Caco-2 (cell line): ENCODE measurements at regions of chr19 and their contacts with region 1.

Region 1: DNA sequence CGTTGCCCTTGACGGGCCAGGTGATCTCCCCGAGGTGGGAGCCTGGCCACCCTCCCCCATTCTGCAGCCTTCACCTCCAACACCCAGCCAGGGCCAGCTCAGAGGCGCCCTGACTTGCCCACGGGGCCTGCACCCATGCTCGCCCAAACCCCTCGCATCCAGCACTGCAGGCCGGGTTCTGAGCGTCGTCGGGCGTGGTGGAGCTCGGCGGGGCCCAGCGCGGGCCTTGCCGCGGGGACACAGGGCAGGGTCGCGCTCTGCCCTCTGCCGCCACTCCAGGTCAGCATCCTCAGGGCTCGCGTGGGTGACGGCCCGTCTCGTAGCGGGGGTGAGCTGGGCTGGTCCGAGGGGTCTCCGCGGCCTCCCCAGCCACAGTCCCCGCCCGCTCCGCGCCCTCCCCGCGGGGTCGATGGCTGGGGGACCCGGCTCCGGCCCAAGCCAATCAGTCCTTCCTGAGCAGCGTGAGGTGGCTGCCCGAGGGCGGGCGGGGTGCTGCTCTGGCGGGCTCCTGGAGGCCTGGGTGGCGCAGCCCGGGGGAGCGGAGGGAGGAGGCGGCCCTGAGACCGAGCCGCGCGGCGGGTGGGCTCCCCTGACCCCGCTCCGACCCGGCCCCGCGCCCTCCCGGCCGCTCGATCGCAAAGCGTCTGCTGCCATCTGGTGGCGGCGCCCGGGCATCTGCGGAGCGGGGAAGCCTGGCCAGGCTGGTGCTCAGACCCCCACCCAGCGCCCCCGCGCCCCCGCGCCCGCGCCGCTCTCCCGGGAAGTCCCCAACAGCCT is 61.4 kb downstream of the CCNE1 start:
- DNase-seq: peak; percentile 59 to 78
- H3K4me3 ChIP-seq: peak overlapping the region; percentile 54
- H3K4me3 Mint-ChIP-seq: peak overlapping the region; percentile 59
- H3K27ac Mint-ChIP-seq: no peak overlapping the region
- H3K4me1 ChIP-seq: peaks cover 15% of the 10 kb centered on the region
- H3K4me1 Mint-ChIP-seq: peaks cover 10% of the 10 kb centered on the region
- H3K27me3 ChIP-seq: no peaks in the 10 kb centered on the region
- H3K27me3 Mint-ChIP-seq: peaks cover 2% of the 10 kb centered on the region
- CTCF ChIP-seq: peak; percentile 78 to 93

Region 2: DNA sequence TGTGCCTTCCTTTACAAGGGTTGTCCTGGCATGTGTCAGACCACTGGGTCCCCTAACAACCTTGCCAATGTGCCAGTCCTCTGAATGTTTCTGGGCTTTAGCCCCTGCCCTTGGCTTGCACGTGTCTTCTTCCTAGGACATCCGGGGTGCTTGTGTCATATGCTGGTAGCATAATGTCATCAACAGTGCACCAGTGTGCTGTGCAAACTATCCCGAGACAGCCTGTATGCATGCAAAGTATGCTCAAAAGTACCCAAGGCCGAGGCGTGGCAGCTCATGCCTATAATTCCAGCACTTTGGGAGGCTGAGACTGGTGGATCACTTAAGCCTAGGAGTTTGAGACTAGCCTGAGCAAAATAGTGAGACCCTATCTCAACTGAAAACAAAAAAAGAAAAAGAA is 137.4 kb before region 1 on chr19:
- CTCF ChIA-PET with region 1: interaction called, 5 read pairs
- POLR2A ChIA-PET with region 1: no interaction called
- intact Hi-C with region 1: loop called (anchors 1 kb)
- DNase-seq: no peak
- H3K4me3 ChIP-seq: no peak overlapping the region
- H3K4me3 Mint-ChIP-seq: no peak overlapping the region
- H3K27ac Mint-ChIP-seq: no peak overlapping the region
- H3K4me1 ChIP-seq: no peaks in the 10 kb centered on the region
- H3K4me1 Mint-ChIP-seq: no peaks in the 10 kb centered on the region
- H3K27me3 ChIP-seq: no peaks in the 10 kb centered on the region; the same call in 1 of the 2 replicates
- H3K27me3 Mint-ChIP-seq: peaks cover 16% of the 10 kb centered on the region
- CTCF ChIP-seq: no peak

Region 3: GRCh38 chr19:29760752-29761502 is 112.3 kb before region 1 on chr19:
- CTCF ChIA-PET with region 1: interaction called, 7 read pairs
- POLR2A ChIA-PET with region 1: no interaction called
- intact Hi-C with region 1: loop called (anchors 1 kb)
- DNase-seq: no peak
- H3K4me3 ChIP-seq: no peak overlapping the region
- H3K4me3 Mint-ChIP-seq: no peak overlapping the region
- H3K27ac Mint-ChIP-seq: no peak overlapping the region
- H3K4me1 ChIP-seq: 0 out of 2 replicates have a peak, but pooled peaks cover 6% of the 10 kb centered on the region
- H3K4me1 Mint-ChIP-seq: no peaks in the 10 kb centered on the region
- H3K27me3 ChIP-seq: no peaks in the 10 kb centered on the region
- H3K27me3 Mint-ChIP-seq: peaks cover 8% of the 10 kb centered on the region
- CTCF ChIP-seq: no peak

Region 4: DNA sequence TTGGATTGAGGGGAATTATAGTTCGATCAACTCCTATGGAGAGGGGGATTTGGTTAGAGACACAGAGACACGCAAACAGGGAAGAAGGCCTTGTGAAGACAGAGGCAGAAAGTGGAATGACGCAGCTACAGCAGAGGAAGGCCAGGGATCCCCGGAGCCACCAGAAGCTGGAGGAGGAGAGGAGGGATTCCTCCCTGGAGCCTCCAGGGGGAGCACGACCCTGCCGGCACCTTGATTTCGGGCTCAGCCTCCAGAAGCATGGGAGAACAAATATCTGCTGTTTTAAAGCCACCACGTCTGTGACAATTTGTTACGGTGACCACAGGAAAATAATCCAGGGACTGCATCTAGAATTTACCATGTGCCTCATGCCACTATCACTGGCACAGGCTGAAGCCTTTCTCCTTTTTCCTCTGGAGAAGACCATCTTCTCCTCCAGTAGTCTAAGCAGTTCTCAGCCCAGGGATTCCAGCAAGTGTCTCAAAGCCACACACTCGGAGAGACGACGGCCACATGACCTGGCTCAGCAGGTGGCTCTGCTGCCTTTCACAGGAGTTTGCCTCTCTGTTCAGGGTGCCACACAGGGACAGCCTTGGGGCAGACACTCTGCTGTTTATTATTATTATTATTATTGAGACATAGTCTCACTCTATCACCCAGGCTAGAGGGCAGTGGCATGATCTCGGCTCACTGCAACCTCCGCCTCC is 101.4 kb before region 1 on chr19:
- CTCF ChIA-PET with region 1: interaction called, 4 read pairs
- POLR2A ChIA-PET with region 1: no interaction called
- intact Hi-C with region 1: loop called (anchors 1 kb)
- DNase-seq: peak; percentile 69 to 76
- H3K4me3 ChIP-seq: 0 out of 2 replicates have a peak overlapping the region, but pooled peaks have one; percentile 13
- H3K4me3 Mint-ChIP-seq: no peak overlapping the region
- H3K27ac Mint-ChIP-seq: no peak overlapping the region
- H3K4me1 ChIP-seq: no peaks in the 10 kb centered on the region
- H3K4me1 Mint-ChIP-seq: no peaks in the 10 kb centered on the region
- H3K27me3 ChIP-seq: no peaks in the 10 kb centered on the region
- H3K27me3 Mint-ChIP-seq: no peaks in the 10 kb centered on the region
- CTCF ChIP-seq: peak; percentile 70 to 98

Region 5: DNA sequence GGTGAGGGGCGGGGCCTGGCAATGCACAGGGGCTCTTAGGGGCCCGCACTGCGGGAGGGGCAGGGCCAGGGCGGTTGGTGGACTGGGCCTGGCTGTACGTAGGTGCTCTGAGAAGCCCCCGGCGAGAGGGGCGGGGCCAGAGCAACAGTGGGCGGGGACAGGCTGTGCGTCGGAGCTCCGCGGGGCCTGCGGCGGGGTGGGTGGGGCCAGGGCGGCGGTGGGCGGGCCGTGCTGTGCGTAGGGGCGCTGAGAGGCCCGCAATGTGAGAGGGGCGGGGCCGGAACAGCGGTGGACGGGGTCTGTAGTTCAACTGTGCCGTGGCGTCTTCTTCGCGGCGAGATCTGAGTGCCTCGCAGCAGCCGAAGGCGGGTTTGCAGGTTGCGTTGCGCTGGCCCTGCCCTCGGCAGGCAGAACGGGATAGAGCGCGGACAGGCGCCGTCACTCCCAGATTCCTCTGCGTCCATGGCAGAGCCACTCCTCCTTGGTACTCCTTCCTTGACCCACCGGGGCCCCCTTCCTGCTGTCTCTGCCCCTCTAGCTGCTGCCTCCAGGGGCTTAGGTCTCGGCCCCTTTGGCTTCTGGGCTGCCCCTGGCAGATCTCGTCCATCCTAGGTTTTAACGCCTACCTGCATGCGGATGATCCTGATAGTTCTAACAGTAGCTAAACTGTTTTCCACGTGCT is 28.2 kb before region 1 on chr19:
- CTCF ChIA-PET with region 1: interaction called, 4 read pairs
- POLR2A ChIA-PET with region 1: no interaction called
- intact Hi-C with region 1: loop called (anchors 1 kb)
- DNase-seq: peak; percentile 98
- H3K4me3 ChIP-seq: peak overlapping the region; percentile 63
- H3K4me3 Mint-ChIP-seq: peak overlapping the region; percentile 89
- H3K27ac Mint-ChIP-seq: peak overlapping the region; percentile 85
- H3K4me1 ChIP-seq: peaks cover 43% of the 10 kb centered on the region
- H3K4me1 Mint-ChIP-seq: peaks cover 37% of the 10 kb centered on the region
- H3K27me3 ChIP-seq: no peaks in the 10 kb centered on the region
- H3K27me3 Mint-ChIP-seq: no peaks in the 10 kb centered on the region
- CTCF ChIP-seq: peak in 1 of 2 experiments; percentile 1

Region 6: GRCh38 chr19:29858000-29858596 is 15.1 kb before region 1 on chr19:
- CTCF ChIA-PET with region 1: interaction called, 56 read pairs
- POLR2A ChIA-PET with region 1: no interaction called
- intact Hi-C with region 1: loop called (anchors 1 kb)
- DNase-seq: peak; percentile 74 to 82
- H3K4me3 ChIP-seq: no peak overlapping the region
- H3K4me3 Mint-ChIP-seq: no peak overlapping the region
- H3K27ac Mint-ChIP-seq: no peak overlapping the region
- H3K4me1 ChIP-seq: peaks cover 11% of the 10 kb centered on the region
- H3K4me1 Mint-ChIP-seq: peaks cover 13% of the 10 kb centered on the region
- H3K27me3 ChIP-seq: no peaks in the 10 kb centered on the region
- H3K27me3 Mint-ChIP-seq: no peaks in the 10 kb centered on the region
- CTCF ChIP-seq: peak; percentile 86

Region 7: GRCh38 chr19:29908963-29909944 is 36.0 kb after region 1 on chr19:
- CTCF ChIA-PET with region 1: no interaction called
- POLR2A ChIA-PET with region 1: no interaction called
- intact Hi-C with region 1: no loop called
- DNase-seq: no peak
- H3K4me3 ChIP-seq: no peak overlapping the region
- H3K4me3 Mint-ChIP-seq: no peak overlapping the region
- H3K27ac Mint-ChIP-seq: no peak overlapping the region
- H3K4me1 ChIP-seq: no peaks in the 10 kb centered on the region
- H3K4me1 Mint-ChIP-seq: no peaks in the 10 kb centered on the region
- H3K27me3 ChIP-seq: no peaks in the 10 kb centered on the region
- H3K27me3 Mint-ChIP-seq: peaks cover 4% of the 10 kb centered on the region
- CTCF ChIP-seq: no peak